ENCODE measurements at regions of chr5 and their contacts with region 1.

Region 1: GRCh38 chr5:177524941-177525618 is 8.3 kb upstream of the DDX41 start:
- DNase-seq: no peak
- ATAC-seq: no peak
- H3K4me3 ChIP-seq: no peak overlapping the region
- H3K27ac ChIP-seq: no peak overlapping the region
- H3K4me1 ChIP-seq: no peaks in the 10 kb centered on the region
- CTCF ChIP-seq: no peak
- EP300 ChIP-seq: no peak
- POLR2A ChIP-seq: no peak
- RAD21 ChIP-seq: no peak

Region 2: DNA sequence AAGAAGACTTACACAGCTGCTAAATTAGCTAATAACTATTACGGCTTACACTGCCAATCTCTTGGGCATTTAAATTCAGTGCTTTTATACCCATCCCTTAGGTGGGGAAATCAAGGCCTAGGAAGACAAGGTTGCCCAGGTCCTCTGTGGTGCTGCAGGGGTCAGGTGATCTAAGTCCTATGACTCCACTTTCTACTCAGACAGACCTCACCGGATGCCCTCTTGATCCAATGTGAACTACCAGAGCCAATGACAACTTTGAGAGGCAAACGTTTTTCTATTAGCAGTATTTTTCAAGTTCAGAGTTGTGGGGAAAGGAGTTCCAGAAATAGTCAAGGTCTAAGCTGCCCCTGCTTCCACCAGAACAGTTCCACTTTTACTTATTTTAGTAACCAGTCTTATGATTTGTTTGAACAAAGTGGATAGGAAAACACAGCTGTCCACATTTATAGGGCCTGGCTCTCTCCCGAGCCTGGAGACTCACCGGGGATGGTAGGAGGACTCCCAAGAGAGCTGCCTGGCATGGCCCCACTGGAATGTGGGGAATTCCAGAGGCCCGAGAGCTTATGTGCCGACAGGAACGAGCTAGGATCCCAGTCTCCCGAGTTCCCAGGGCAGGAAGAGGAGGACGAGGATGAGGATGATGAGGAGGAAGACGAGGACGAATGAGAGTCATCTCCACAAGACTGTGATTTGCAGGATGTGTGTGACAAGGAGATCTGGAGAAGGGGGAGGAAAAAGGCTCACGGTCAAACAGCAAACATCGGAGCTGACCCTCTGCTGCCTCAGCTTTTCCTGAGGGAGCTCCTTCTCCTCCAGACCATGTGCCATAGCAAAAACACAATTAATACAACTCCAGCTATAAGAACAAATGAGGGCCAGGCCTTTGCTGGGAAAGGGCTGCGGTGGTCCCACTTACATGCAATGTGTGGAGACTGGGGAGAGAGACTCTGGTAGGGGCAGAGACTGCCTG is 12.6 kb after region 1 on chr5:
- CTCF ChIA-PET with region 1: interaction called, 10 read pairs
- POLR2A ChIA-PET with region 1: interaction called, 4 read pairs
- DNase-seq: peak; percentile 61 to 65
- ATAC-seq: peak; percentile 81 to 96
- H3K4me3 ChIP-seq: no peak overlapping the region
- H3K27ac ChIP-seq: peak overlapping the region; percentile 9 to 76; a peak in 4 of 6 replicates
- H3K4me1 ChIP-seq: peaks cover 26% of the 10 kb centered on the region
- CTCF ChIP-seq: no peak
- EP300 ChIP-seq: no peak
- POLR2A ChIP-seq: no peak
- RAD21 ChIP-seq: no peak

Region 3: DNA sequence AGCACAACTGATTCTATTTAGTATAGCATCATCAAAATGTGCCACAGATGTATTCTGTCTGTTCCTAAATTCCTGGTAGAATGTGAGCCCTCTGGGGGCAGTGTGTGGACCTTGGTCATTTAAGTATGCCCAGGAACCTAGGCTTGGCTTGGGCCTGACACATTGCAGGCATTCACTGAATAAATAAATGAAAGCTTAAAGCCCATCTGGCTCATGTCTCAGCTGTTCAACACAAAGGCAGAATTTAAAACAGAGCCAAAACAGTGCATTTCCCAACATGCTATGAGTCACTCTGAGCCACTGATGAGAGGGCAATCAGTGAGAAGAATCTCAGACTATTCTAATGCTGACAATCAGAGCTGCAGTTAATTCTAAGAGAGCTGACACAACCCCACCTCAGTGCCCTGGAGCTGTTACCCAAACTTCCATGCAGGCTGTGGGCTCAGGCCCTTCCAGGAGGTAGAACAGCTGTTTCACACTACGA is 21.2 kb after region 1 on chr5:
- CTCF ChIA-PET with region 1: interaction called, 18 read pairs
- POLR2A ChIA-PET with region 1: no interaction called
- DNase-seq: peak; percentile 54 to 68
- ATAC-seq: peak; percentile 89 to 92
- H3K4me3 ChIP-seq: peak overlapping the region; percentile 25; the same call in 1 of the 3 replicates
- H3K27ac ChIP-seq: peak overlapping the region; percentile 53 to 79
- H3K4me1 ChIP-seq: peaks cover 30% of the 10 kb centered on the region
- CTCF ChIP-seq: peak; percentile 18; the same call in 1 of the 3 replicates
- EP300 ChIP-seq: 0 out of 5 replicates have a peak, but pooled peaks of 1 of the 2 experiments have one; percentile 24
- POLR2A ChIP-seq: no peak
- RAD21 ChIP-seq: no peak